BJ (cell line): ENCODE measurements at regions of chr2 and their contacts with region 1.

Region 1: GRCh38 chr2:88170472-88170892 is 336 bp downstream of the THNSL2 start:
- DNase-seq: no peak
- H3K4me3 ChIP-seq: peak overlapping the region; percentile 57
- H3K27me3 ChIP-seq: no peaks in the 10 kb centered on the region
- CTCF ChIP-seq: peak; percentile 18; the same call in 1 of the 2 replicates

Region 2: DNA sequence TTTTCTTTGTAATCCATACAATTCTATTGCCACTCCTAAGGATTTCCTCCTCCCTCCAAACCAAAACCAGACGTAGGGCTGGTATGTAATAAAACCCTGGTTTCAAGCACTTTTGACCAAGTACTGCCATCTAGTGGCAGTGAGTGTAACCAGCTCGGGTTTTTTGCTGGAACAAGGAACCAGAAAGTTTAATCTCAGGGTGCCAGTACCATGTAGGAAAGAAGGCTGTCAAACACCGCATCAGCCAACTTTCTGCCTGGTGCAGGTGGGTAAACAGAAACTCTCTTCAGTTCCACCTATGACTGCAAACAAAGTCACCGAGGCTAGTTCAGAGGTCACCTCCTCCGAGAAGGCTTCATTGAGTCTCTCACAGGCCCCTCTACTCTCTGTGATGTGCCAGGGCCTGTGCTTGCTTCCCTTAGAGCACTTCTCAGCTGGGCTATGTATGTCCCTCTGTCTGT is 10.5 kb before region 1 on chr2:
- CTCF ChIA-PET with region 1: interaction called, 18 read pairs
- POLR2A ChIA-PET with region 1: no interaction called
- DNase-seq: no peak
- H3K4me3 ChIP-seq: no peak overlapping the region
- H3K27me3 ChIP-seq: no peaks in the 10 kb centered on the region; the same call in 1 of the 2 replicates
- CTCF ChIP-seq: peak; percentile 80